Calu3 (cell line): ENCODE measurements at regions of chr19 and their contacts with region 1.

Region 1: DNA sequence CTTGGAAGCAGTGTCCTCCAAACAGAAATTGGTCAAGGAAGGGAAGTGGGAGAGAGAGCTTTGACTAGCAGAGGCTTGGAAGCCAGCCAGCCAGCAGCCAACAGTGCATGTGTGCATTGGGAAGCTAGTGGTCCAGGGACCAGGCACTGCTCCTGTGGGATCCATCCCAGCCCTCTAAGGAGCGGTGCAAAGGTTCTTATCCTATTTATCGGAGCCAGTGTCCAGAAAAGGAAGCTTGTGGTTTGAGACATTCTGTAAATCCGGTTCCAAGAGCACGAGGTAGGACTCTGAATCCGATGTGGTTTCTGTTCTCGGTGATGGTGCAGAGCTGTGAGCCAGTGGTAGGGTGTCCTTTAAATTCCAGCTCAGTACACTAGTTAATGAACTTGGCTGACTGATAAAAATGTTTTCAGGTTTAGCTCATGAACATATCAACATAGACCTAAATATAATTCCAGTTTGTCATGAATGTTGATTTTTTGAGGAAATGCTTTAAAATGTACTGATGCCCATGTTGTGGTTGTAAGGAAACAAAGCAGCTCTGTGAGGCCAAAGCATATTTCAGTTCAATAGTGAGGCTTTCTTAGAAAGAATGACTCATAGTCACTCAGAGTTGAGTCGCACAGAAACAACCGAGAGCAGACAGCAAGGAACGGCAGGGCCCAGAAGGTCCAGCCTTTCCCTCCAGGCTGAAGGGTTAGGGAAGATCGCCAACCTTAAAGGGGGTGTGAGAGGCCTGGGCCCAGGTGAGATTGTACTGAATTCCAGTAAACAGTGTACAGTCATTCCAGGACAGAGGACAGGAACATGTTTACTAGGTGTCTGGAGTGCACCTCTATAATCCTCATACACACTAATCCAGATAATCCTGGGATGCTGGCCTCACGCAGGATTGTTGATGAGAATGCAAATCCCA is 21.5 kb upstream of the GARRE1 start:
- DNase-seq: peak; percentile 76
- H3K4me3 Mint-ChIP-seq: peak overlapping the region; percentile 17
- H3K27ac Mint-ChIP-seq: peak overlapping the region; percentile 35
- H3K4me1 Mint-ChIP-seq: peaks cover 27% of the 10 kb centered on the region
- H3K27me3 Mint-ChIP-seq: no peaks in the 10 kb centered on the region
- CTCF ChIP-seq: no peak

Region 2: DNA sequence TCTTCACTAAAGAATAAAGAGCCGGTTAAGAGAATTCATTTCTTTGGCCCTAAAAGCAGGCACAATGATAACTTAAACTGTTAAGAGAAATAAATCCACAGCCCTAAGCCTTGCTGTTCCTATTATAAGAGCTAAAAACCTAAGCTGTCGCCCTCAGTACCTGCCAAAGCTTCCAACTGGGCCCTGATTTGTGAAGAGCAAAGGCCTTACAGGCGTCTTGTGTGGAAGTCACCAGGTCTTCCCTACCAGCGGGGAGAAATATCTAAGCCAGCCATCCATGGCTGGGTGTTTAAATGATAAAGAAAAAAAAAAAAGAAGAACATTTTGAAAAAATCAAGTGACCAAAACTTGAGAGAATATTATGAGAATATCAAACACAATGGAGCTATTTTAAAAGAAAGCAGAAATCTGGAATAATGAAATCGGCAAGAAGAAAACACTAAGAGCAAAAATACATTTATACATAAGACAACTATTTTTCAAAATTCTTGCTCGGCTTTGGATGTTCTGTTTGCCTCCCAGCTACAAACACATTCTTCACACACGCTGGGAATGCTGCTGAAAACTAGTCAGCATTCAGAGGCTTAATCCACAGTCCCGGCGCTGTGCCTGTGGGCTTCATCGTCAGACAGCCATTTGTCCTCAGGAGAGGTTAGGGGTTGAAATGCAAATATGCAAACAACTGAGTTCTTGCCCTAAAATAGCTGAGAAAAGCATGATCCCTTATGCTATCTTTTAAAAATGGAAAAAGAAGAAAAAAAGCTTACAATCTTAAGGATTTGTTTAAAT is 150.3 kb before region 1 on chr19:
- CTCF ChIA-PET with region 1: no interaction called
- intact Hi-C with region 1: no loop called
- DNase-seq: no peak
- H3K4me3 Mint-ChIP-seq: no peak overlapping the region
- H3K27ac Mint-ChIP-seq: no peak overlapping the region
- H3K4me1 Mint-ChIP-seq: no peaks in the 10 kb centered on the region
- H3K27me3 Mint-ChIP-seq: peaks cover 76% of the 10 kb centered on the region
- CTCF ChIP-seq: no peak

Region 3: GRCh38 chr19:34193439-34193838 is 39.4 kb before region 1 on chr19:
- CTCF ChIA-PET with region 1: interaction called, 11 read pairs
- intact Hi-C with region 1: no loop called
- DNase-seq: no peak
- H3K4me3 Mint-ChIP-seq: no peak overlapping the region
- H3K27ac Mint-ChIP-seq: no peak overlapping the region
- H3K4me1 Mint-ChIP-seq: peaks cover 28% of the 10 kb centered on the region
- H3K27me3 Mint-ChIP-seq: no peaks in the 10 kb centered on the region
- CTCF ChIP-seq: no peak

Region 4: DNA sequence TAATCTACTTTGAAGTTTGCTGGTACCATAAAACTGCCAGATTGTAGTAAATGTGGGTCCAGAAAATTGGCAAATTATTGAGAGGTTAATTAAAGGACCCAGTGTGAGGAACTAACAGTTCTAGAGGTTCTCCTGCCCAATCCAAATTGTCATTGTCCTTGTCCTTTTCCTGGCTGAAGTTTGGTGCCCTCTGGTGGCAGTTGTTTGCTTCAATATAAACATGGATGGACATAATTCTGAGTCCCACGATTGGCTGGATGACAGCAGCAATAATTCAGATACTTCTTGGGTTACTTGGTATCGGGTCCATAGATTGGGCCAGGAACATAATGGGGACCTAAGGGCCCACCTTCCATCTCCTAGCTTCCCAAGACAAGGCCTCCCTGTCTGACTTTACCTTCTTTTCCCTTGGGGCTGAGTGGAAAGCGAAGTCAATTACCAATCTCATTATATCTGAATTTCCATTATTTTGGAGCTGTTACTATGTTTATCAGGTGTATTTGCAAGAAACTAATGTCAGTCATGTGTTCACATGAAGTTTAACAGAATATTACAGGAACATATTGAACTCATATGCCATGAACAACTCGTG is 12.3 kb before region 1 on chr19:
- CTCF ChIA-PET with region 1: interaction called, 11 read pairs
- intact Hi-C with region 1: no loop called
- DNase-seq: peak; percentile 78
- H3K4me3 Mint-ChIP-seq: no peak overlapping the region
- H3K27ac Mint-ChIP-seq: no peak overlapping the region
- H3K4me1 Mint-ChIP-seq: peaks cover 38% of the 10 kb centered on the region
- H3K27me3 Mint-ChIP-seq: no peaks in the 10 kb centered on the region
- CTCF ChIP-seq: peak; percentile 84

Region 5: GRCh38 chr19:34317311-34317927 is 84.6 kb after region 1 on chr19:
- CTCF ChIA-PET with region 1: interaction called, 11 read pairs
- intact Hi-C with region 1: no loop called
- DNase-seq: no peak
- H3K4me3 Mint-ChIP-seq: no peak overlapping the region
- H3K27ac Mint-ChIP-seq: no peak overlapping the region
- H3K4me1 Mint-ChIP-seq: peaks cover 38% of the 10 kb centered on the region
- H3K27me3 Mint-ChIP-seq: no peaks in the 10 kb centered on the region
- CTCF ChIP-seq: no peak

Region 6: DNA sequence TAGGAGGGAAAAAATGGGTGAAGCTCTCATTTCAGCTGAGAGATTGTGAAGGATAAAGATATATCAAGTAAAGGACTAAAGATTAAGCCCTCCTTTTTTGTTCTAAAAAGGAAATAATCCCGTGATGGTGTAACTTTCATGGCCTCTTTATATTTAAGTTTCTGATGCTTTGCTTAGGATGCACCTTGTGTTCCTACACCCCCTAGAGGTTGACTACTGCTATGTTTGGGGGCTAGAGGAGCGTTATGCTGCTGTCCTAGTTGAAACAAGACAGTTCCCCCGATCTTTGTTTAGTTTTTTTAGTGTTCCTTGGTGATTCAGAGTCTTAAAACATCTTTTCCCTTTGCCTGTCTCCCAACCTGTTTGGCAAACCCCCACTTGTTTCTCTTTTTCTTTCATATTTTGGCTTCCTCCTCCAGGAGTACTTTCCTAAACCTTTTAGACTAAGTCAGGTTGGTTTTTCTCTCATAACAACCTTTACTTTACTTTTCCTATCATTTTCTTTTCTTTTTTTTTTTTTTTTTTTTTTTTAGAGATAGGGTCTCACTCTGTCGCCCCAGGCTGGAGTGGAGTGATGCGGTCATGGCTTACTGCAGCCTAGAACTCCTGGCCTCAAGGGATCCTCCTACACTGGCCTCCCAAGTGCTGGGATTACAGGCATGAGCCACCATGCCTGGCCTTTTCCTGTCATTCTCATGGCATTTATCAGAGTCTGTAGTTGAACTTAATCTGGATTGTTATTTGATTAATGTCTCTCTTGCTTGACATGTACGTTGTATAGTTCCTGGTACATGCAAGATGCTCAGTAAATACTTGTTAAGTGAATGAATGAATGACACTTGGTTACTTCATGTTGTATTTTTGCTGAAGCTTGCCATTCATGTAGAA is 198.2 kb after region 1 on chr19:
- CTCF ChIA-PET with region 1: interaction called, 3 read pairs
- intact Hi-C with region 1: loop called (anchors 10 kb)
- DNase-seq: peak; percentile 51
- H3K4me3 Mint-ChIP-seq: peak overlapping the region; percentile 92
- H3K27ac Mint-ChIP-seq: peak overlapping the region; percentile 29
- H3K4me1 Mint-ChIP-seq: peaks cover 11% of the 10 kb centered on the region
- H3K27me3 Mint-ChIP-seq: no peaks in the 10 kb centered on the region
- CTCF ChIP-seq: peak; percentile 77